Activated T-helper 1 cell treated with anti-CD3 and anti-CD28 coated beads, Interleukin-12 subunit alpha, Interleukin-12 subunit beta, Interleukin-2, Interleukin-4 antibody, amounts not matched to agents 30 ng/mL and 10 ng/mL and 1 ng/mL, durations not matched to agents 14 hours and 24 hours and 36 hours (primary cell): ENCODE measurements at regions of chr12 and their contacts with region 1.

Region 1: DNA sequence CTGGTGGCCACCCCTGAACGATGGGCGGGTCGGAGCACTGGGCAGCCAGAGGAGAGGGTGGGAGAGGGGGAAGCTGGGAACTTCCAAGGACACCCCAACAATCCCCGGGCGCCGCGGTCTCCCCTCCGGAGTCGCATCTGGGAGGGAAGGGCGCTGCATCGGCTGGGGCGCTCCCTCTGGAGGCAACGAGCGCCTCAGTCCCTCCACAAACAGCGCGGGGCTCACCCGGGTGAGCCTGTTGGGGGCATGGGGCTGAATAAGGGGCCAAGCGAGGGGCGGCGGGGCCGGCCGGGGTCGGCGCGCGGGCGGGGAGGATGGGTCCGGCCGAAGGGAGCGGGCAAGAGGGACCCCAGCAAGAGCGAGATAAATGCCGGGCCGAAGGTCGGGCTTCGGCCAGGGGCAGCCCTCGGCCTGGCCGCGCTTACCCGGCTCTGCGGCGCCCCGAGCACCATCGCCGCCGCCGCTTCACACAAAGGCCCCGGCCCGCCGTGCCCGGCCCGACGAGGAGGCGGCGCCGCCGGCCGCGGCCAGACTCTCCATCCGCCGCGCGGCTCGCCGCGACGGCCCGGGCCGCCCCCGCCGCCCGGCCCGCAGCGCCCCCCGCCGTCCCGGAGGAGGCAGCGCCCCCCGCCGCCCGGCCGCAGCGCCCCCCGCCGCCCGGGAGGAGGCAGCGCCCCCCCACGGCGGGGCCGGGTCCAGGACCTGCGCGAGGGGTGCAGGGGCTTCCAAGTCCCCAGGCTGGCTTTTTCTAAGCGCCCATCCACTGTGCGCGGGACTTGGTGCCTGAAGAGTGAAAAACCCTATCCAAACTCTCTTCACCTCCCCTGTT is at the start of gene ZBTB39:
- DNase-seq: peak; percentile 65
- H3K4me3 Mint-ChIP-seq: peak within 1 kb of the TSS; percentile 93
- H3K27ac Mint-ChIP-seq: peak within 1 kb of the TSS; percentile 85
- H3K4me1 Mint-ChIP-seq: peaks cover 47% of the 10 kb centered on the region
- H3K27me3 Mint-ChIP-seq: no peaks in the 10 kb centered on the region
- total RNA-seq, gene ZBTB39: 10.3 and 11.2 TPM in 2 replicates

Region 2: GRCh38 chr12:56751712-56752598 is 254.2 kb before region 1 on chr12 and contains the start of gene PRIM1:
- intact Hi-C with region 1: loop called (anchors 1 kb)
- DNase-seq: peak; percentile 85
- H3K4me3 Mint-ChIP-seq: peak within 1 kb of the TSS; percentile 99
- H3K27ac Mint-ChIP-seq: peak within 1 kb of the TSS; percentile 99
- H3K4me1 Mint-ChIP-seq: peaks cover 45% of the 10 kb centered on the region
- H3K27me3 Mint-ChIP-seq: no peaks in the 10 kb centered on the region
- total RNA-seq, gene PRIM1: 67.5 and 67.8 TPM in 2 replicates

Region 3: GRCh38 chr12:56987551-56988053 is 18.6 kb before region 1 on chr12:
- intact Hi-C with region 1: loop called (anchors 2 kb)
- DNase-seq: peak; percentile 54
- H3K4me3 Mint-ChIP-seq: no peak overlapping the region
- H3K27ac Mint-ChIP-seq: no peak overlapping the region
- H3K4me1 Mint-ChIP-seq: peaks cover 23% of the 10 kb centered on the region
- H3K27me3 Mint-ChIP-seq: peaks cover 3% of the 10 kb centered on the region

Region 4: DNA sequence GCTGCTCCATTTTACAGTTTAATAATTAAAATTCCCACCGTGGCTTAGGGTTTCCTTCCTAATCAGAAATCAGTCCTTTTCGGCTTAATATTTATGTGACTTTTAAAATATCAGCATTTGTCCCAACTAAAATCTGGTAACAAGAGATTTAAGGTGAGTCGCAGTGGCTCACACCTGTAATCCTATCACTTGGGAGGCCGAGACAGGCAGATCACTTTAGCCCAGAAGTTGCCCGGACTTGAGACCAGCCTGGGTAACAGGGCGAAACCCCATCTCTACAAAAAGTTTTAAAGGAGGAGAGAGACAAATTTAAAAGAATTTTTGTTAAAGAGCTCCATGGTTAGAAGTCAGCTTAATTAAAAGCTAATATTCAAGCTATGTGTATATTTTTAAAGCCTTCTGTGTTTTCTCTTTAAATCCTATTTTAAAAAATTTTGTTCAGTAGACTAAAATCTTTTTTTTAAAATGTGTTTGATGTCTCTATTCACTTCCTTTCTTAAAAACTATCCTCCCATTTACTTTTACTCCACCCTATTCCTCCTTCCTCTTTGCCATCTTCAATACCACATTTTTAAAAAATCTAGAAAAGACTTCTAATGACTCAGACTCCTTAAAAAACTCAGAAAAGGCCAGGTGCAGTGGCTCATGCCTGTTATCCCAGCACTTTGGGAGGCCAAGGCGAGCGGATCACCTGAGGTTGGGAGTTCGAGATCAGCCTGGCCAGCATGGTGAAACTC is 14.0 kb after region 1 on chr12:
- intact Hi-C with region 1: no loop called
- DNase-seq: no peak
- H3K4me3 Mint-ChIP-seq: no peak overlapping the region
- H3K27ac Mint-ChIP-seq: no peak overlapping the region
- H3K4me1 Mint-ChIP-seq: peaks cover 8% of the 10 kb centered on the region
- H3K27me3 Mint-ChIP-seq: peaks cover 11% of the 10 kb centered on the region

Region 5: GRCh38 chr12:57031138-57031725 is 25.0 kb after region 1 on chr12:
- intact Hi-C with region 1: loop called (anchors 1 kb)
- DNase-seq: no peak
- H3K4me3 Mint-ChIP-seq: no peak overlapping the region
- H3K27ac Mint-ChIP-seq: peak overlapping the region; percentile 18
- H3K4me1 Mint-ChIP-seq: peaks cover 34% of the 10 kb centered on the region
- H3K27me3 Mint-ChIP-seq: no peaks in the 10 kb centered on the region

Region 6: DNA sequence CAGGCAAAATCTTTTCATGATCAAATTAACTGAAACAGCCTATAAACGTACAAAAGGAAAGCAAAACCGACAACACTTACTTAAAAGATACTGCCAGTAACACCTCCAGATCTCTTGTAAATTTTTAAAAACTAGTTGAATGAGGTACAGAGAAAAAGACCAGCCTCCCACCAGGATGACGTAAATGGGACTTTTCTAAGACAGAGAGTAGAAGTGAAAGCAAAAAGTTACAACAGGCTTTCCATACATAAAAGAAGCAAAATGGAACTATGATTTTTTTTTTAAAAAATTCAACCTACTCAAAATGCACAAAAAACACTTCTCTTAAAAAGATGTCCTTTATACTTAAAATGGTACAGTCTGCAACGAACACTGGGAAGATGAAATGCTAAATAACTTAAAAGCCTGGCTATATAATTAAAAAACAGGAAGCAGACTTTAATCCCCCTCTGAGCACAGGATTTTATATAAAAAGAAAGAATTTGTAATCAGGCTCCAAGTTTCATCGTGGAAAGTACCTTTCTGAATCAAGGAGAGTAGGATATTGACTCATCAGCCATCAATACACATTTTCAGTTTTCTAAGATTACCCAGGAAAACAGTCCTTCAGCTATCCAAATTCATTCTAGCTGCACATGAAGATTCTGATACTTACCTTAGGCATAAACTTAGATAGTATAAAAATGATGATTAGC is 57.9 kb after region 1 on chr12:
- intact Hi-C with region 1: loop called (anchors 1 kb)
- DNase-seq: peak; percentile 57
- H3K4me3 Mint-ChIP-seq: peak overlapping the region; percentile 82
- H3K27ac Mint-ChIP-seq: peak overlapping the region; percentile 94
- H3K4me1 Mint-ChIP-seq: peaks cover 54% of the 10 kb centered on the region
- H3K27me3 Mint-ChIP-seq: no peaks in the 10 kb centered on the region

Region 7: DNA sequence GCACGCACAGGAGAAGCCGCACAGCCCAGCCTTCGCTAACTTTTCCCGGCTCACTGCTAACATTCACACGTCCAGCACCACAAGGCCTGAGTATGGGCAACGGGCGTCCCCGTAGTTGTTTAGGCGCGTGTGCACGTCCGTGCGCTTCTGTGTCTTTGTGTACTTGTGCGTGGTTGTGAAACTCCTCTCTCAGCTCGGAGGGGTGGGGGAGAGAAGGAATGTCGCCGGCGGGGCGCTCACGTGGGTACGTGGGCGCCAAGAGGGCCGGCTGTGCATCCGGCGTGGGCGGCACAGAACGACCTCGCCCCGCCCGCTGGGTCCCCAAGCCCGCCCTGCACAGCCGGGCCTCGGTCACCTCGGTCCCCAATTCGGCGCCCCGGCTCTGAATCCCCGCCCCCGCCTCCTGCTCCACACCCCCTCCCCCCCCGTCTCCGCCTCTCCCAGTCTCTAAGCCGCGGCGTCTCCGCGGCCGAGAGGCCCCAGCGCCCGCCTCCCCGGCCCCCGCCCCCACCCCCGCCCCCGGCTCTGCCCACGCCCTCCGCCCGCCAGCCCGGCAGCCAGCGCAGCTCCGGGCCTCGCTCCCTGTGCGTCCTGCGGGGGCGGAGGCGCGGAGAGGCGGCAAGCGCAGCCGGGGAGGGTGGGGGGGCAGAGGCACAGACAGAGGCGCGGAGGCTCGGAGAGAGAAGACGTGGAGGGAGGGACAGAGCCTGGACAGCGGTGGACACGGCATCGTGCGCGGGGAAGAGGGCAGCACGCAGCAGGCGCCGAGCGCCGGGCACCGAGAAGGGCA is 82.5 kb after region 1 on chr12 and contains the start of gene NAB2:
- intact Hi-C with region 1: loop called (anchors 1 kb)
- DNase-seq: peak; percentile 88
- H3K4me3 Mint-ChIP-seq: peak within 1 kb of the TSS; percentile 97
- H3K27ac Mint-ChIP-seq: peak within 1 kb of the TSS; percentile 98
- H3K4me1 Mint-ChIP-seq: peaks cover 77% of the 10 kb centered on the region
- H3K27me3 Mint-ChIP-seq: no peaks in the 10 kb centered on the region
- total RNA-seq, gene NAB2: 73.6 and 80.3 TPM in 2 replicates

Region 8: DNA sequence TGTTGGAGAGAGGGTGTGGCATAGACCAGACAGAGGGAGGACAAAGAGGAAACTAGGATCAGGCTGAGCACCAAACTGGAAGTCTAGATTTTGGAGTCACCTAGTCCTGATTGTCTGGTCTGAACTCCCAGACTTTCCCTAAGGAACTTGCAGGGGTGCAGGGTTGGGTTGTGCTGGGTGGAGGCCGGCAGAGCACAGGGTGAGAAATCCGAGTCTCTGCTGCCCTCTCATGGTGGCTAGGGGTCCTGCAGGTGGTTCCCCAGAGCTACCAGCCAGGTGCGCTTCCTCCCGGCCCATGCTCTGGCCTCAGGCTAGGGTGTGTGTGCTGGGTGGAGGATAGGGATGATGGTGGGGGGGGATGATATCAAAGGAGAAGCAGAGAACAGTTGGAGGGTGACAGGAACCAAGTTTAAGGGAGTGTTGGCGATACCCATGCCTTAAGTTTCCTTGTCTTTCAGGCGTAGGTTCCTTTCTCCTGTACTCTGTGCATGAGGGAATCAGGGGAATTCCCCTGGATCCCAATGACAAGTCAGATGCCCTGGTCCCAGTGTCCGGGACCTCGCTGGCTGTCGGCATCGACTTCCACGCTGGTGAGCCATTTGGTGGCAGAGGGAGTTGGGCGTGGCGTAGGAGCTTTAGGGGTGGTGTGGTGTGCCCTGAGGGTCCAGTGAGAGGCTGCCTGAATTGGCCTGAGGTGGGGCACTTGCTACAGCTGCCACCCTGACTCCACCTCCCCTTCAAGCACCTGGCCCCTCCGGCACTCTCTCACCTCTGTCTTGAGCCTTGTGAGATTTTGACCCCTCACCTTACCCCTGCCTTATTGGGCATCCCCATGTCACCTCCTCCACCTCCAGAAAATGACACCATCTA is 177.0 kb after region 1 on chr12:
- intact Hi-C with region 1: loop called (anchors 1 kb)
- DNase-seq: peak; percentile 65
- H3K4me3 Mint-ChIP-seq: no peak overlapping the region
- H3K27ac Mint-ChIP-seq: peak overlapping the region; percentile 34
- H3K4me1 Mint-ChIP-seq: peaks cover 6% of the 10 kb centered on the region
- H3K27me3 Mint-ChIP-seq: peaks cover 6% of the 10 kb centered on the region